ENCODE measurements at regions of chr15 and their contacts with region 1.

Region 1: GRCh38 chr15:48667701-48668100 is 22.2 kb upstream of the FBN1 start:
- DNase-seq: peak; percentile 61
- ATAC-seq: peak; percentile 48
- H3K4me3 ChIP-seq: no peak overlapping the region
- H3K27ac ChIP-seq: peak overlapping the region; percentile 69
- H3K4me1 ChIP-seq: peaks cover 33% of the 10 kb centered on the region
- H3K27me3 ChIP-seq: no peaks in the 10 kb centered on the region
- CTCF ChIP-seq: no peak

Region 2: DNA sequence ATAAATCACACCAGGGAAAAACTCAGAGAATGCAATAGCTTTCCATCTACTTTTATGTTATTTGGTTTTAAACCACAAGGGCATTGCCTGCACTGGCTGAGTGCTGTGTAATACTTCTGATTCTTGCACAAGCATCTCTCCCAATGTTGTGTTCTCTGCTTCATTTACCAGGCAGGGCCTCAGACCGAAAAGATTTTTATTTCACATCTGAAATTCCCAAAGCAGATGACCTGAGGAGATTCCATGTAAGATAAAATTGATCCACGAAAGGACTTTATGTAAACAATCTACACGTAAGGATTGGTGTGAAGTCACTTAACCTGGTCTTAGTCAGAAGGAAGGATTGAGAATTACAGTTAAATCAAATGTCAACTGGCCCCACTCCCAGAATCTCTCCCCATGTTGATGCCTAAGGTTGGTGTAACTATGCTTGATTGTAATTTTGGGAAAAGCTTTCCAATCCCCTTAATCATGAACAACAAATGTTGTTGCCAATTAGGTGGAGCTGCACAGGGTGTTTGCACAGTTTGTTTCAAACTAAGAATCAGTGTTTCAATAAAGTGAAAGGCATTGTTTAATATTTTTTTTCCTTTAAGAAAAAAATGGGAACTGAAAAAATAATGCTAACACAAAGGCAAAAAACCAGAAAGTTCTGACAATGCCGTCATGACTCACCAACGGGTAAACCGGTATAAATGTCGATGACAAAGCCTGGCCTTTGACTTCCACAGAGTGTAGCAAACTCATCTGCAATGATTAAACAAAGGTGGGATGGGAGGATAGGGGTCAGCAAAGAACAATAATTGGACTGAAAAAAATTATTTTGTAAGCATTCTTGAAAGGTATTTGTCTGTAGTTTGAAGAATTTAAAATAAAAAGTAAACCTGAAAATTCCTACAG is 207.9 kb before region 1 on chr15:
- CTCF ChIA-PET with region 1: no interaction called
- POLR2A ChIA-PET with region 1: no interaction called
- intact Hi-C with region 1: no loop called
- DNase-seq: peak; percentile 88
- ATAC-seq: peak; percentile 64
- H3K4me3 ChIP-seq: no peak overlapping the region; the same call in 1 of the 2 replicates
- H3K27ac ChIP-seq: peak overlapping the region; percentile 99
- H3K4me1 ChIP-seq: peaks cover 51% of the 10 kb centered on the region
- H3K27me3 ChIP-seq: no peaks in the 10 kb centered on the region
- CTCF ChIP-seq: no peak

Region 3: DNA sequence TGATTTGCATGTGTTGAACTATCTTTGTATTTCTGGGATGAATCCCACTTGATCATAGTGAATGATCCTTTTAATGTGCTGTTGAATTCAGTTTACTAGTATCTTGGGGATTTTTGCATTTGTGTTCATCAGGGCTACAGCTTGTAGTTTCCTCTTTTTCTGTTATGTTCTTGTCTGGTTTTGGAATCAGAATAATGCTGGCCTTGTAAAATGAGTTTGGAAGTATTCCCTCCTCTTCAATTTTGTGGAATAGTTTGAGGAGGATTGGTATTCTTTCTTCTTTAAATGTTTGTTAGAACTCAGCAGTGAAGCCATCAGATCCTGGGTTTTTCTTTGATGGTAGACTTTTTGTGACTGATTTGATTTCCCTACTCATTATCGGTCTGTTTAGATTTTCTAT is 40.9 kb after region 1 on chr15:
- CTCF ChIA-PET with region 1: no interaction called
- POLR2A ChIA-PET with region 1: no interaction called
- intact Hi-C with region 1: loop called (anchors 5 kb)
- DNase-seq: no peak
- ATAC-seq: no peak
- H3K4me3 ChIP-seq: no peak overlapping the region
- H3K27ac ChIP-seq: no peak overlapping the region
- H3K4me1 ChIP-seq: no peaks in the 10 kb centered on the region
- H3K27me3 ChIP-seq: no peaks in the 10 kb centered on the region
- CTCF ChIP-seq: no peak